A673 (cell line): ENCODE measurements at regions of chr17 and their contacts with region 1.

Region 1: DNA sequence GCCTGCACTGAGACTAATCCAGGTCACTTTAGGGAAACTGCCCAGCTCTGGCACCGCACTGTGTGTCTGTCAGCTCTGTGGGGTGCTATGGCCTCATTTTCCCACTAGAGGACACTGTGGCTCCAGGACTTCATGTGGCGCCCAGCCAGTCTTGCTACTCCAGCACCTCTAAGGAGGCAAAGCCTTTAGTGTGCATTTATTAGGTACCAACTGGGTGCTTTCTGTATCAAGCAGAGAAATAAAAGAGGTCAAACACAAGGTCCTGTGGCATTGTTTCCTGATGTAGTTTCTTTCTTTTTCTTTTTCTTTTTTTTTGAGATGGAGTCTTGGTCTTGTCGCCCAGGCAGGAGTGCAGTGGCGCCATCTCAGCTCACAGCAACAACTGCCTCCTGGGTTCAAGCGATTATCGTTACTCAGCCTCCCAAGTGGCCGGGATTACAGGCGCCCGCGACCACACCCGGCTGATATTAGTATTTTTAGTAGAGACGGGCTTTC is 12.5 kb upstream of the RHBDL3 start:
- DNase-seq: peak; percentile 71
- H3K4me3 ChIP-seq: no peak overlapping the region
- H3K27ac ChIP-seq: no peak overlapping the region
- H3K4me1 ChIP-seq: no peaks in the 10 kb centered on the region
- H3K27me3 ChIP-seq: no peaks in the 10 kb centered on the region
- CTCF ChIP-seq: peak; percentile 76

Region 2: DNA sequence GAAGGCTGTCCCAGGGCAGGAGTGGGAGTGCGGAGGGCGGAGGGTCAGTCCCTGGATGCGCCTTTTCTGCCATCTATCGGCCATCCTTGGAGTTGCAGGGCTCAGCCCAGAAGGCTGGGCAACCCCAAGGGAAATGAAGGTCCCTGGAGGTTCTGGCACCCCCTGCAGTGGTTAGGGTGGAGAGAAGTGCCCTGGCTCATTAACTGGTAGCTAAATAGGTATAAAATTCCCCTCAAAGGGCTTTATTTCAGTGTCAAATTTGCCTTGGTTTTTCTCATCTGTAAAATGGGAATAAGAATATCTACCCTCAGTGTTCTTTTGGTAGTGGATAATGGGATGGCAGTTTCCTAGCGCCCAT is 66.4 kb after region 1 on chr17:
- CTCF ChIA-PET with region 1: no interaction called
- POLR2A ChIA-PET with region 1: no interaction called
- intact Hi-C with region 1: loop called (anchors 1 kb)
- DNase-seq: peak; percentile 66
- H3K4me3 ChIP-seq: no peak overlapping the region
- H3K27ac ChIP-seq: no peak overlapping the region
- H3K4me1 ChIP-seq: no peaks in the 10 kb centered on the region
- H3K27me3 ChIP-seq: no peaks in the 10 kb centered on the region
- CTCF ChIP-seq: peak; percentile 73

Region 3: GRCh38 chr17:33674685-33675084 is 1421.5 kb after region 1 on chr17:
- CTCF ChIA-PET with region 1: interaction called, 14 read pairs
- POLR2A ChIA-PET with region 1: no interaction called
- intact Hi-C with region 1: no loop called
- DNase-seq: peak; percentile 54
- H3K4me3 ChIP-seq: no peak overlapping the region
- H3K27ac ChIP-seq: no peak overlapping the region
- H3K4me1 ChIP-seq: no peaks in the 10 kb centered on the region
- H3K27me3 ChIP-seq: no peaks in the 10 kb centered on the region
- CTCF ChIP-seq: peak; percentile 61